ENCODE measurements at regions of chr4 and their contacts with region 1.

Region 1: GRCh38 chr4:108433832-108434231 is 186.5 kb upstream of the RPL34 start:
- DNase-seq: peak; percentile 44
- H3K4me3 Mint-ChIP-seq: no peak overlapping the region
- H3K27ac Mint-ChIP-seq: peak overlapping the region; percentile 21
- H3K4me1 Mint-ChIP-seq: peaks cover 37% of the 10 kb centered on the region
- H3K27me3 Mint-ChIP-seq: peaks cover 5% of the 10 kb centered on the region

Region 2: DNA sequence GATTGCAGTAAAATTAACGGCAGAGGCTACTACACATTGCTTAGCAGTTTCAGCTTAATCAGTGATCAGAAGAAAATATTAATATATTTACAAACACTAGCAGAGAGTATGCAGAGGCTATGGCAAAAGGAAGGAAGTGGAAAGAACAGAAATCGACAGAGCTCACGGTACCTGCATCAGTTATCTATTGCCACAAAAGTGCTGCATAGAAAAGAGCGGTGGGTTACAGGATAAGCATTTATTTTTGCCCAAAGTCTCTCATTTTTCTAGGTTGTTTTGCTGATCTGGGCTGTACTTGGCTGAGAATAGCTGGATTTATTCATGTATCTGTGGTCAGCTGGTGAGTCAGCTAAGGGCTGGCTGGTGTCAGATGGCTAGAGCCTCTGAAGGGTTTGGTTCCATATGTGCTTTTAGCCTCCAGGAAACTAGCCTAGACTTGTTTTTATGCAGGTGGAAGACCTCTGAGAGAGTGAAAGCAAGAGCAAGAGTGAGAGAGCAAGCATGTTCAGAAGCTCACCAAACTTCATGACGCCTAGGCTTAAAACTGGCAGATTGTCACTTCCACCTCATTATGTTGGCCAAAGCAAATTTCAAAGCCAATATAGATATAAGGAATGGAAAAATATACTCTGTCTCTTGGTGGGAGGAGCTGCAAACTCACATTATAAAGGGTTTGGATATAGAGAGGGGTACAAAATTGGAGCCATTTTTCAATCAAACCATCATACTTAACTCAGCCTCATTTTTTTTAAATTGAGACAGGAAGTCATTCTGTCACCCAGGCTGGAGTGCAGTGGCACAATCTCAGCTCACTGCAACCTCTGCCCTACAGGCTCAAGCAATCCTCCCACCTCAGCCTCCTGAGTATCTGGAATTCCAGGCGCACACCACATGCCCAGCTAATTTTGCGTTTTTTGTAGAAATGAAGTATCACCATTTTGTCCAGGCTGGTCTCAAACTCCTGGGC is 33.4 kb after region 1 on chr4:
- CTCF ChIA-PET with region 1: no interaction called
- POLR2A ChIA-PET with region 1: no interaction called
- intact Hi-C with region 1: loop called (anchors 2 kb)
- DNase-seq: peak; percentile 47
- H3K4me3 Mint-ChIP-seq: peak overlapping the region; percentile 39
- H3K27ac Mint-ChIP-seq: peak overlapping the region; percentile 68
- H3K4me1 Mint-ChIP-seq: peaks cover 30% of the 10 kb centered on the region
- H3K27me3 Mint-ChIP-seq: no peaks in the 10 kb centered on the region

Measured in activated CD4-positive, alpha-beta memory T cell treated with anti-CD3 and anti-CD28 coated beads for 36 hours (primary cell).